ENCODE measurements at regions of chr1 and their contacts with region 1.

Region 1: GRCh38 chr1:231584124-231584523 is 42.5 kb upstream of the DISC1 start:
- ATAC-seq: peak in 3 of 8 experiments; percentile 59 to 90 (median 66)
- H3K4me3 ChIP-seq: no peak overlapping the region
- H3K27ac ChIP-seq: no peak overlapping the region
- H3K4me1 ChIP-seq: peaks cover 5 to 11% of the 10 kb centered on the region in 2 donors

Region 2: DNA sequence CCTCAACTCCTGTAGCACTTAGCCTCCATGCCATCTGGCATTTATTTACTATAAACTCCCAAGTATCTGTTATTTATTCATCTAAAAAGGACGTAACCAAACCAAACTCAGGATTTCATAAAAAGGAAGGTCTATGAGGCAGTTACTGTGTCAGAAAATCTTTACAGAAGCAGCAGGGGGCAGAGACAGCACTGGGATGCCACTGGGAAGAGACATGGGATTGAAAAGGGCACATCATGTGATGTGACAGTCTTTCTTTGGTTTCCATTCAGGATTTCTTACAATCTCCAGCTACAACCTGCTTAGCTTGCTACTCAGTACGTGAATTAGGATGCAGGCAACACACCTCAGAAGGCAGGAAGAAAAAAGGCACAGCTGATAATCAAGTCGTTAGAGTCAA is 214.8 kb before region 1 on chr1:
- in situ Hi-C with region 1: loop called in 4 of 9 experiments (anchors 10 to 25 kb)
- ATAC-seq: peak in 2 of 8 experiments; percentile 62 to 67
- H3K4me3 ChIP-seq: no peak overlapping the region
- H3K27ac ChIP-seq: no peak overlapping the region
- H3K4me1 ChIP-seq: no peaks in the 10 kb centered on the region

Region 3: GRCh38 chr1:231383159-231383860 is 200.8 kb before region 1 on chr1:
- in situ Hi-C with region 1: no loop called
- ATAC-seq: no peak
- H3K4me3 ChIP-seq: no peak overlapping the region
- H3K27ac ChIP-seq: no peak overlapping the region
- H3K4me1 ChIP-seq: no peaks in the 10 kb centered on the region

Region 4: DNA sequence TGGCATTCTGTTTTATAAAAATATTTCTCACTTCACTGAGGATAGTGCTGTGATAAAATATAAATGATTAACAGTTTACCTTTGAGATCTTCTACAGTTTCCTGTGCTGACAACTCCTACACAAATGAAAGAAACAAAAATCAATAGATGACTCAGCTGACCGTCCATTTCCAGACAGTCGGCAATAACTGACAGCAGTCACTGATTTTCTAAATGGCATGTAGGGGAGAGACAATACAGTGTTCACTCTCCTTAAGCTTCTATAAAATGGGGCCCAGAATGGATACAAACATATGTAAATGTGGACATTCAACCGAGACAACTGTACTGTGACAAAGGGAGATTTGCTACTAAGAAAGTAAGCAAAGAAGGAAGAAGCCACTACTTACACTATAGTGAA is 1677.1 kb after region 1 on chr1:
- in situ Hi-C with region 1: no loop called
- ATAC-seq: peak in 5 of 8 experiments; percentile 56 to 94 (median 91)
- H3K4me3 ChIP-seq: no peak overlapping the region
- H3K27ac ChIP-seq: no peak overlapping the region
- H3K4me1 ChIP-seq: peaks cover 7 to 18% of the 10 kb centered on the region in 2 donors